HCT116 (cell line): ENCODE measurements at regions of chr5 and their contacts with region 1.

Region 1: DNA sequence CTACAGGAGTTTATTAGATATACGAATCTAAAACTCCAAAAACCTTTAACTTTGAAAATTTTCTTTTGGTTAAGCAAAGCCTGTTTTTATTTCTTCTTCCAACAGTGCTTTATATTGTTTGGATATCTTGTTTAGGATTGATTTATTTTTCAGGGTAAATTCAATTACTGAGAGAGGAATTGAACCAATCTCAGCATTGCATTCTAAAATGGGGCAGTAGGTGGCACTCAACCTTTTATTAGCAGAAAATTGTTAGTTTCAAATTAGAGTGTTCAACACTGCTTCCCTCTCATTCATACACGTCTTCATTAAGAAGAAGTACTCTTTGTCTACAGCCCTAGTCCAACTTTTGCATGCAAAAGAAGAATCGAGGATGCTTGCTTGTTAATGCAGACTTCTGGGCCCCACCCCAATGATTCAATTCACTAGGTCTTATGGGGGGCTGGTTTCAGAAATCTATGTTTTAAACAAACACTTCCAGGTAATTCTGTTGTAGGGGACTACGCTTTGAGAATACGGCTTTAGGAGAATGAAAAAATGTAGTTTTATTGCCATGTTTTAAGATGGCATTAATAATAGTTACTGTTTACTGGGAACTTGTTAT is 26.6 kb downstream of the MRPL22 start:
- DNase-seq: no peak
- ATAC-seq: peak; percentile 78
- H3K4me3 ChIP-seq: no peak overlapping the region
- H3K27ac ChIP-seq: no peak overlapping the region
- H3K4me1 ChIP-seq: no peaks in the 10 kb centered on the region
- H3K27me3 ChIP-seq: no peaks in the 10 kb centered on the region
- CTCF ChIP-seq: peak; percentile 26 to 69 (median 61); a peak in 4 of 6 replicates
- POLR2A ChIP-seq: no peak
- RAD21 ChIP-seq: peak; percentile 33; the same call in 1 of the 2 replicates

Region 2: GRCh38 chr5:155004138-155004744 is 36.7 kb after region 1 on chr5:
- CTCF ChIA-PET with region 1: interaction called, 36 read pairs
- POLR2A ChIA-PET with region 1: interaction called, 4 read pairs
- RAD21 ChIA-PET with region 1: interaction called, 3 to 8 read pairs
- intact Hi-C with region 1: loop called (anchors 1 kb)
- DNase-seq: peak; percentile 31
- ATAC-seq: peak; percentile 89
- H3K4me3 ChIP-seq: no peak overlapping the region
- H3K27ac ChIP-seq: no peak overlapping the region
- H3K4me1 ChIP-seq: peaks cover 4 to 18% of the 10 kb centered on the region in 2 experiments; a peak in 2 of 4 replicates
- H3K27me3 ChIP-seq: no peaks in the 10 kb centered on the region
- CTCF ChIP-seq: peak; percentile 69 to 81 (median 75)
- POLR2A ChIP-seq: no peak
- RAD21 ChIP-seq: peak; percentile 90

Region 3: DNA sequence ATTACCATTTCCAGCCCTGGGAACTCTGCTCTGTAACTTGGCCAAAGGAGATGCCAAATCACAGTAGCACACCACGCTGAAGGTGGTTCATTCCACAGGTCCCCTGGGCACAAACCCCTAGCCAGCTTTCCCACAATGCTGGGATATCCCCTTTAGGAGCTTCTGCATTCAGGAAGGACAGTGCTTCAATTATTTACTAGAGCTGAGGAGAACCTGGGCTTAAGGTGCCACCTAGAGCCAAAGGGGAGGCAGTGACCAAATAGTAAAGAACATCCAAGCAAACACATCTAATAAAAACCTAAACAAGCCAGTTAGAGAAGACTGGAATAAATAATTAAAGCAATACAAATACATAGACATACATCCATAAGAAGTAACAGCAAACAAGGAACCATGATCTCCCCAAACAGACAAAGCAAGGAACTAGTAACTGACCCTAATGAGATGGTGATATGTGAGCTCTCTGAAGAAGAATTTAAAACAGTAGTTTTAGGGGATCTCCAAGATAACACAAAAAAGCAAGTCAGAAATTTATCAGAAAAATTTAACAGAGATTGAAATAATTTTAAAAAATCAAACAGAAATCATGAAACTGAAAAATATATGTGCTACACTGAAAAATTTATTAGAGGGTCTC is 60.6 kb after region 1 on chr5:
- CTCF ChIA-PET with region 1: interaction called, 38 read pairs
- POLR2A ChIA-PET with region 1: no interaction called
- RAD21 ChIA-PET with region 1: interaction called in 1 of 2 experiments, 3 read pairs
- intact Hi-C with region 1: loop called (anchors 1 kb)
- DNase-seq: peak; percentile 27
- ATAC-seq: peak; percentile 96
- H3K4me3 ChIP-seq: no peak overlapping the region
- H3K27ac ChIP-seq: no peak overlapping the region
- H3K4me1 ChIP-seq: no peaks in the 10 kb centered on the region
- H3K27me3 ChIP-seq: no peaks in the 10 kb centered on the region; the same call in 1 of the 2 replicates
- CTCF ChIP-seq: peak; percentile 52 to 56 (median 54); a peak in 5 of 6 replicates
- POLR2A ChIP-seq: no peak
- RAD21 ChIP-seq: peak; percentile 78